ENCODE measurements at regions of chr5 and their contacts with region 1.

Region 1: DNA sequence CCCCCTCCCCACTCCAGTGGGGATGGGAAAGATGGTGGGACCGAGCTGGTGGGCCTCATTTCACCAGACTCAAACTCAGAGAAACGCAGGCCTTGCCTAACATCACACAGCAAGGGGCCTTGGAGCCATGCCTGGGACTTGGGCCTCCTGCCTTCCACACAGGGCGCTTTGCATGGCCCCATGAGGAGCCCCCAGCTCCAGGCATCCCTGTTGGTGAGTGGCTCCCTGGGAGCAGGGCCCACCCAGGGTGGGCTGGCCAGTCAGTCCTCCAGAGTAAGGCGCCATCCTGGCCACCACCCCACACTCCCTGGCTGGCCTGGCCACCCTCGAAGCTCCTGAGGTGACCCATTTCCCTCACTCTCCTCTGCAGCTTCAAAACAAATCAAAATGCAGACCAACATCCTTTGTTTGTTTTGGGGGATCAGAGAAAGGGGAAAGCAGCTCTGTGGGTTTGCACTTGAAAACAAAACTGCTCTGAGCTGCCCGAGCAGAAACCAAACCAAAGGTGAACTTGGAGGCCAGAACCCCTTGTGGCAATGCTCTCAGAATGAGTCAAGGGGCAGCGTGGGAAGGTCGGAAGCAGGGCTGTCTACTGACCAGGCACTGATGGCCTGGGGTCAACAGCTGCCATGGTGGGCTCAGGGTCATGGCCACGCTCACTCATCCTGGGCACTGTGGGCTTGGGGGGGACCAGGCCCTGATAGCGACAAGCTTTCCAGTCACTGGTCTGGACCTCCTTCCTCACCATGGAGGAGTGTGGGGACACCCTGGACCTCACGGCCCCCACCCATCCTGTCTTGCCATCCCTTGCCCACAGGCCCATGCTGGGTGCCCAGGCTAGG is 37.0 kb upstream of the VDAC1 start:
- DNase-seq: peak in 1 of 9 donors; percentile 11
- ATAC-seq: no peak
- H3K4me3 ChIP-seq: no peak overlapping the region
- H3K4me3 Mint-ChIP-seq: peak overlapping the region; percentile 16 to 81 (median 53)
- H3K27ac ChIP-seq: peak overlapping the region; percentile 24
- H3K27ac Mint-ChIP-seq: peak overlapping the region in 8 of 9 donors; percentile 22 to 91 (median 62)
- H3K4me1 ChIP-seq: peaks cover 11 to 59% of the 10 kb centered on the region in 2 donors
- H3K4me1 Mint-ChIP-seq: peaks cover 26 to 88% (median 68%) of the 10 kb centered on the region in 7 donors
- H3K27me3 ChIP-seq: no peaks in the 10 kb centered on the region
- H3K27me3 Mint-ChIP-seq: peaks cover 0 to 6% (median 0%) of the 10 kb centered on the region in 5 donors

Region 2: DNA sequence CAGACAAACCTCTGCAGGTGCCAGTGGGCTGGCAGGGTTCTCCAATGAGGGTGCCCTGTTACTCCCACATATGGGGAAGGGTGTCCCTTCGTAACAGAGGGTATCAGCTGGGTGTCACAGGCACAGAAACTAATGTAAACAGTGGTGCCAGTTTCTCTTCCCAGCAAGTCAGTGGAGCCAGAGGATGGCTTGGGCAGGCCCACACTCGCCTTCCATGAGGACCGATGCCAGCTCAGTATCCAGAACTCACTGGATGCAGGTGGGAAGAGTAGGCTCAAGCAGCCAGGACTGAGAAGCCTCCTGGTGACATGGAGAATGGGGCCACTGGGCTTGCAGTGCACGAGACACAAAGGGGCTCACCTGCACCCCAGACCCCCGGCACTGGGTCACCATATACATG is 459.9 kb before region 1 on chr5:
- CTCF ChIA-PET with region 1: no interaction called
- POLR2A ChIA-PET with region 1: no interaction called
- intact Hi-C with region 1: no loop called
- DNase-seq: no peak
- ATAC-seq: no peak
- H3K4me3 ChIP-seq: no peak overlapping the region
- H3K4me3 Mint-ChIP-seq: no peak overlapping the region
- H3K27ac ChIP-seq: no peak overlapping the region
- H3K27ac Mint-ChIP-seq: no peak overlapping the region
- H3K4me1 ChIP-seq: no peaks in the 10 kb centered on the region
- H3K4me1 Mint-ChIP-seq: no peaks in the 10 kb centered on the region
- H3K27me3 ChIP-seq: no peaks in the 10 kb centered on the region
- H3K27me3 Mint-ChIP-seq: peaks cover 10 to 36% (median 26%) of the 10 kb centered on the region in 5 donors

Region 3: DNA sequence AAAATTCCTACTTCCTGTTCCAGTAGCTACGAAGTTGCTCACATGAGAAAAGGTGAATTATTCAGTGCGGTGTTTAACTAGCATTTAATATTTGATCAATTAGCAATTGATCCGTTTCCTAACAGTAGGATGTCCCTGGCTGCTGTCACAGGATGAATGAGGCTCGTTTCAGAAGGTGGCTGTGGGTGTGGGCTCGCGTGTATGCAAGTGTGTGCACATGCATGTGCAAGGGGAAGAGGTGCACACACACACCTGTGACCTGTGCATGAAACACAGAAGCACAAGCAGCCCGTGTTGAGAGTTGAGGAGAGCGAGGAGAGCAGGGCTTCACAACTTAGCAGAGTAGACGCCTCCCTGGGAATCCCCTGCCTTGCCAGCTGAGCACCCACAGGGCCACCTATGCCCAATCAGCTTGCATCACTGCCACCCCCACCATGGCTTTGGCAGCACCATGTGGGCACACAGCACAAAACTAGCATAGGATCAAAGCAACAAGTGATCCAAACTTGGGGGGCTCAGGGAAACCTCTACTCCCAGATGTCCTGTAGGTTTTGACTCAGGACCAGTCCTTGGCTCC is 180.5 kb before region 1 on chr5:
- CTCF ChIA-PET with region 1: no interaction called
- POLR2A ChIA-PET with region 1: no interaction called
- intact Hi-C with region 1: no loop called
- DNase-seq: no peak
- ATAC-seq: peak; percentile 29
- H3K4me3 ChIP-seq: no peak overlapping the region
- H3K4me3 Mint-ChIP-seq: no peak overlapping the region
- H3K27ac ChIP-seq: no peak overlapping the region
- H3K27ac Mint-ChIP-seq: no peak overlapping the region
- H3K4me1 ChIP-seq: no peaks in the 10 kb centered on the region
- H3K4me1 Mint-ChIP-seq: peaks cover 0 to 11% (median 0%) of the 10 kb centered on the region in 7 donors
- H3K27me3 ChIP-seq: no peaks in the 10 kb centered on the region
- H3K27me3 Mint-ChIP-seq: peaks cover 0 to 4% (median 2%) of the 10 kb centered on the region in 5 donors

Region 4: GRCh38 chr5:134053840-134054338 is 12.1 kb after region 1 on chr5:
- CTCF ChIA-PET with region 1: interaction called, 17 read pairs
- POLR2A ChIA-PET with region 1: interaction called, 38 read pairs
- intact Hi-C with region 1: no loop called
- DNase-seq: peak in 5 of 9 donors; percentile 25 to 42 (median 36)
- ATAC-seq: peak; percentile 78
- H3K4me3 ChIP-seq: no peak overlapping the region
- H3K4me3 Mint-ChIP-seq: peak overlapping the region; percentile 52 to 88 (median 74)
- H3K27ac ChIP-seq: peak overlapping the region; percentile 58
- H3K27ac Mint-ChIP-seq: peak overlapping the region; percentile 72 to 97 (median 90)
- H3K4me1 ChIP-seq: peaks cover 7 to 50% of the 10 kb centered on the region in 2 donors
- H3K4me1 Mint-ChIP-seq: peaks cover 24 to 61% (median 46%) of the 10 kb centered on the region in 7 donors
- H3K27me3 ChIP-seq: no peaks in the 10 kb centered on the region
- H3K27me3 Mint-ChIP-seq: no peaks in the 10 kb centered on the region

Region 5: GRCh38 chr5:134077926-134078580 is 36.3 kb after region 1 on chr5:
- CTCF ChIA-PET with region 1: interaction called, 16 read pairs
- POLR2A ChIA-PET with region 1: interaction called, 31 read pairs
- intact Hi-C with region 1: no loop called
- DNase-seq: peak in 2 of 9 donors; percentile 43 to 45
- ATAC-seq: peak; percentile 49
- H3K4me3 ChIP-seq: no peak overlapping the region
- H3K4me3 Mint-ChIP-seq: peak overlapping the region; percentile 59 to 83 (median 78)
- H3K27ac ChIP-seq: peak overlapping the region; percentile 46
- H3K27ac Mint-ChIP-seq: peak overlapping the region; percentile 90 to 99 (median 97)
- H3K4me1 ChIP-seq: peaks cover 20 to 73% of the 10 kb centered on the region in 2 donors
- H3K4me1 Mint-ChIP-seq: peaks cover 43 to 91% (median 83%) of the 10 kb centered on the region in 7 donors
- H3K27me3 ChIP-seq: no peaks in the 10 kb centered on the region
- H3K27me3 Mint-ChIP-seq: no peaks in the 10 kb centered on the region

Region 6: GRCh38 chr5:134101686-134102439 is 60.1 kb after region 1 on chr5:
- CTCF ChIA-PET with region 1: interaction called, 3 read pairs
- POLR2A ChIA-PET with region 1: no interaction called
- intact Hi-C with region 1: loop called (anchors 1 kb)
- DNase-seq: peak in 8 of 9 donors; percentile 55 to 79 (median 69)
- ATAC-seq: peak; percentile 62
- H3K4me3 ChIP-seq: peak overlapping the region; percentile 19
- H3K4me3 Mint-ChIP-seq: peak overlapping the region in 6 of 10 donors; percentile 27 to 81 (median 64)
- H3K27ac ChIP-seq: peak overlapping the region; percentile 80
- H3K27ac Mint-ChIP-seq: peak overlapping the region in 8 of 9 donors; percentile 32 to 98 (median 94)
- H3K4me1 ChIP-seq: peaks cover 73 to 89% of the 10 kb centered on the region in 2 donors
- H3K4me1 Mint-ChIP-seq: peaks cover 51 to 98% (median 83%) of the 10 kb centered on the region in 7 donors
- H3K27me3 ChIP-seq: no peaks in the 10 kb centered on the region
- H3K27me3 Mint-ChIP-seq: peaks cover 0 to 11% (median 0%) of the 10 kb centered on the region in 5 donors

Region 7: GRCh38 chr5:134140530-134141201 is 98.9 kb after region 1 on chr5:
- CTCF ChIA-PET with region 1: interaction called, 365 read pairs
- POLR2A ChIA-PET with region 1: interaction called, 1,333 read pairs
- intact Hi-C with region 1: loop called (anchors 1 kb)
- DNase-seq: peak in 5 of 9 donors; percentile 30 to 63 (median 50)
- ATAC-seq: peak; percentile 67
- H3K4me3 ChIP-seq: no peak overlapping the region
- H3K4me3 Mint-ChIP-seq: peak overlapping the region in 5 of 10 donors; percentile 21 to 58 (median 41)
- H3K27ac ChIP-seq: peak overlapping the region; percentile 97
- H3K27ac Mint-ChIP-seq: peak overlapping the region; percentile 60 to 99 (median 90)
- H3K4me1 ChIP-seq: peaks cover 38 to 61% of the 10 kb centered on the region in 2 donors
- H3K4me1 Mint-ChIP-seq: peaks cover 36 to 81% (median 60%) of the 10 kb centered on the region in 7 donors
- H3K27me3 ChIP-seq: no peaks in the 10 kb centered on the region
- H3K27me3 Mint-ChIP-seq: peaks cover 0 to under 1% (median 0%) of the 10 kb centered on the region in 5 donors

Region 8: DNA sequence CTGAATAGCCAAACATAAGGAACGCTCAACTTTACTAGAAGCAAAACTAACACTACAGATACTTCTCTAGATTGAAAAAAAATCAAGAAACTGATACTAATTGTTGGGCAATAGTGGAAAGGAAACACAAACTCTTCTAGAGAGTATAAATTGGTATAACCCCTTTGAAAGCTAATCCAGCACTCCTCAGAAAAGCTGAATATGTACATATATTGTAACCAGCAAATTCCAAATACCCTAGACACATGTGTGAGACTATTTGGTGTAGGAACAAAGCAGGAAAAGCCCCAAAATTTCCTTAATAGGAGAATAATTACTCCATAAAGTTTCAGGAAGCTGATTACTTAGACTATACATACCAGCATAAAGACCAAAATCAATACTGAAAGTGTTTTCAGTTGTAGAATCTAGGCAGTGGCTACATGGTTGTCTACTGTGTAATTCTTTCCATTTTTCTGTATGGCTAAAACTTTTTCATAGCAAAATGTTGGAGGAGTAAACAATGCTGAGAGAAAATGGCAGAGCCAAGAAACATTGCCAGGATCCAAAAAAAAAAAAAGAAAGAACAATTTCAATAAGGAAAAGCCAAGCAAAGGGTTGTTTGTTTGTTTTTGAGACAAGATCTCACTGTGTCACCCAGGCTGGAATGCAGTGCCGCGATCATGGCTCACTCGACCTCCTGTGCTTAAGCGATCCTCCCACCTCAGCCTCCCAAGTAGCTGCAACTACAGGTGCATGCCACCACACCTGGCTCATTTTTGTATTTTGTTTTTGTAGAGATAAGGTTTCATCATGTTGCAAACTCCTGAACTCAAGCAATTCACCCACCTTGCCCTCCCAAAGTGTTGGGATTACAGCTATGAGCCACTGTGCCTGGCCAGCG is 120.0 kb after region 1 on chr5:
- CTCF ChIA-PET with region 1: interaction called, 14 read pairs
- POLR2A ChIA-PET with region 1: interaction called, 1,333 read pairs
- intact Hi-C with region 1: no loop called
- DNase-seq: no peak
- ATAC-seq: no peak
- H3K4me3 ChIP-seq: no peak overlapping the region
- H3K4me3 Mint-ChIP-seq: no peak overlapping the region
- H3K27ac ChIP-seq: no peak overlapping the region
- H3K27ac Mint-ChIP-seq: peak overlapping the region in 6 of 9 donors; percentile 20 to 78 (median 38)
- H3K4me1 ChIP-seq: peaks cover 0 to 5% of the 10 kb centered on the region in 2 donors
- H3K4me1 Mint-ChIP-seq: peaks cover 13 to 70% (median 49%) of the 10 kb centered on the region in 7 donors
- H3K27me3 ChIP-seq: no peaks in the 10 kb centered on the region
- H3K27me3 Mint-ChIP-seq: no peaks in the 10 kb centered on the region

Measured in naive thymus-derived CD4-positive, alpha-beta T cell (primary cell).